Endothelial cell of umbilical vein (primary cell): ENCODE measurements at regions of chr4 and their contacts with region 1.

Region 1: DNA sequence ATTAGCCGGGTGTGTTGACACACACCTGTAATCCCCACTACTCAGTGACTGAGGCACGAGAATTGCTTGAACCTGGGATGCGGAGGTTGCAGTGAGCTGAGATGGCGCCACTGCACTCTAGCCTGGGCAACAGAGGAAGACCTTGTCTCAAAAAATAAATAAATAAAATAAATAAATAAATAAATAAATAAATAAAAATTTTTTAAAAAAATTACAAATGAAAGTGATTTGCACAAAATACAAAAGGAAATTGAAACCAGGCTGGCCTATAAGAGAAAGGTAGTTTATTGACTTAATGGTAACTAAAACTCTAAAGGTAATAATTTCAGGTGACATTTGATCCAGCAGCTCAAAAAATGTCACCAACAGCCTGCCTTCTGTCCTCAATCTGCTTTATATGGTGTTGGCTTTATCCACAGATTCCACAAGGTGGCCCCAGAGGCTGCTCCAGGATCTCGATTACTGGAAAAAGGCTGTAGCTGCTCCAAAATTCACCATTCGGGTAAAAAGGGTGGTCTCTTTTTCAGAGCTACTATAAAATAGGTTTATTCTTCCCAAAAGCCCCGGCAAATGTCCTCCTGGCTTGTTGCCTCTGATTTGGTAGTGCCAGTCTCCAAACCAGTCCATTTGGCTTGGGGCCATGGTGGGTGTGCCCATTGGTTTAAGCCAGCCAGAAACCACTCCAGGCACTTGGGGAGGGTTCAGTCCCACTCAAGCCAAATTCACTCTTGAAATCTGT is 61.4 kb upstream of the TRIM2 start:
- DNase-seq: peak; percentile 79
- H3K4me3 ChIP-seq: no peak overlapping the region
- H3K27ac ChIP-seq: no peak overlapping the region
- H3K4me1 ChIP-seq: peaks cover 14% of the 10 kb centered on the region
- H3K27me3 ChIP-seq: no peaks in the 10 kb centered on the region
- CTCF ChIP-seq: peak; percentile 80
- POLR2A ChIP-seq: no peak

Region 2: DNA sequence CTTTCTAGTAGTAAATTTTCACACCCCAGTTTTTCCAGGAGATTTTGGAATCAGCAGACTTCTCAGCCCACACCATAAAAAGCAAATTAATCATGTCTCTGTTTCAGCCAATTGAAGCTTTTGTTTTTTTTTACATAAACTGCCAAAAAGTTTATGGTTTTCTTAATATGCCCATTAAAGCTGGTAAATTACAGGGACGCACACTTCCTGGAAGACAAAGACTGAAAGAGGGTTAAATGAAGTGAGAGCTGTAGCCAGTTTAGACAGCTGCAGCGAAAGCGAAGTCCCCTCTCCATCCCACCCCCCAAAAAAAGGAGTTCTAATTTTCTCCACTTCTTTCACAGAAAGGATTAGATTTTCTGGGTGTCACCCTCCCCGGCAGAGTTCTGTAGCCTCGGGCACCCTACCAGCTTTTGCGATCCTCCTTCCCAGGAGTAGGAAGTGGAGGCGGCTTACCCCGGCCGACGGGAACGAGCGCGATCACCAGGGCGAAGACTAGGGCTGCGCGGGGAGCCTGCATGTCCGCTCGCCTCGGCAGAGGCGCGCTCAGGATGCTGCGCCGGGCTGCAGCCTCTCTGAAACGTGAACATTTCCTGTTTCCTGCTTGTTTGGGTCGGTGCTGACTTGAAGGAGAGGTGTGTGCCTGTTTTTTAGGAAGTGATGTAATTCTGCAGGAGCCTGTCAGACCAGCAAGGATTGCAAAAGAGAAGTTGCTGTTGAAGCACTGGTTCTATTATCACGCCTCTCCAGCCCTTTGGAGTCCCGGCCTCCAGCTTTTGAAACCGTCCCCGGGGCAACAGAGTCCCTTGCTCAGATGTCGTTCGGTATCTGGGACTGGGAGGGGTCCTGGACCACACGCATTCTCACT is 463.2 kb before region 1 on chr4 and contains the start of gene TMEM154:
- CTCF ChIA-PET with region 1: no interaction called
- POLR2A ChIA-PET with region 1: no interaction called
- dilution Hi-C with region 1: no loop called
- intact Hi-C with region 1: no loop called
- DNase-seq: peak; percentile 75
- H3K4me3 ChIP-seq: peak within 1 kb of the TSS; percentile 49 to 93 (median 83)
- H3K27ac ChIP-seq: peak within 1 kb of the TSS; percentile 85
- H3K4me1 ChIP-seq: peaks cover 44% of the 10 kb centered on the region
- H3K27me3 ChIP-seq: no peaks in the 10 kb centered on the region
- CTCF ChIP-seq: no peak
- POLR2A ChIP-seq: peak; percentile 84
- total RNA-seq, gene TMEM154: 43.6 and 50.0 TPM in 2 replicates

Region 3: DNA sequence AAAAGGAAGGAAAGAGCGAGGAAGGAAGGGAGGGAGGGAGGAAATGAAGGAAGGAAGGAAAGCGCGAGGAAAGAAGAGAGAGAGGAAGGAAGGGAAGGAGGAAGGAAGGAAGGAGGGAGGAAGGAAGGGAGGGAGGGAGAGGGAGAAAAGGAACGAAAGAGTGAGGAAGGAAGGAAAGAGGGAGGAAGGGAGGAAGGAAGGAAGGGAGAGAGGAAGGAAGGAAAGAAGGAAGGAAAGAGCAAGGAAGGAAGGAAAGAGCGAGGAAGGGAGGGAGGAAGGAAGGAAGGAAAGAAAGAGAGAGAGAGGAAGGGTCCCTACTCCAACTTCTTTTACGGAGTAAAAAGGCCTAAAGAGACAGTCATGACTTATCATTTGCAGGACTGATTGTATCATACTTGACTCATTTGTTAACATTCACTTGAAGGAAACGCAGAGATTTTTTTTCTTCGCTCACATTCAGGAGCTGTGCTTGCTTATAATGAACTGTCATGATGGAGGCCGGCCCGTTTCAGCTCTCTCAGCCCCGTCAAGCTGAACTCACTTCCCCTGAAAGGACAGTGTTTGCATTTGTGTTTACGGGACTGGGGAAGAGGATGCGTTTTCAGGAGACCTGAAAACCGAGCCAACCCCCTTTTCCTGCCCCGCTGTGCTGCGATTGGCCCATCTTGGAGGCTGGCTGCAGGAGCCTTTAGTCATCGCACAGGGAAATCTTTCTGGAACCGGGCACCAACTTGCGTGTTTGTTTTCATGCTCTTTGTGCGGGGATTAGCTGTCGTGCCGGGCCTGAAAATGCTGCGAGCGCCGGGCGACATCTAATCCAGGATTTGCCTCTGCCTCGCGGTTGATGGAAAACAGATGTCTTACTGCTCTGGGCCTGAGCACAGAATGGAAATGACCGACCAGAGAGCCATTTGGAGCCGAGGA is 79.2 kb after region 1 on chr4:
- CTCF ChIA-PET with region 1: interaction called, 7 read pairs
- POLR2A ChIA-PET with region 1: no interaction called
- dilution Hi-C with region 1: no loop called
- intact Hi-C with region 1: loop called (anchors 2 kb)
- DNase-seq: peak; percentile 82
- H3K4me3 ChIP-seq: peak overlapping the region; percentile 39 to 73 (median 56)
- H3K27ac ChIP-seq: peak overlapping the region; percentile 57
- H3K4me1 ChIP-seq: peaks cover 14% of the 10 kb centered on the region
- H3K27me3 ChIP-seq: peaks cover 4 to 5% of the 10 kb centered on the region in 2 experiments
- CTCF ChIP-seq: no peak
- POLR2A ChIP-seq: no peak

Region 4: DNA sequence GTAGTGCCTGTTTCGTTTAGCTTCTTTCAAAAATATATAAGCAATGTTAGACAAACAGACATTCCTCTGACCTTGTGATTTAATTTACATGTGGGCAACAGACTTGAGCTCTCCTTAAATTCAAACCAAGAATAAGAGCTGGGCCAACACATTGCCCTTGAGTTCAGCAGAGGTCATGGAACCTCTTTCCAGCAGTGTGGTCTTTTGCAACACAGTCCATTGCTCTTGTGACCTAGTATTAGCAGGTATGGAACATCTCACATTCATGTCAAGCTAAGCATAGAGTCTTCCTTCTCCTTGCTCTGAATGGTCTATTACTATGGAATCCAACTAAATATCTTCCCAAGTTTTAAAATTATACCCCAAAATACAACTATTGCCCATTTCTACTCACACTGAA is 167.9 kb after region 1 on chr4:
- CTCF ChIA-PET with region 1: interaction called, 69 read pairs
- POLR2A ChIA-PET with region 1: no interaction called
- dilution Hi-C with region 1: no loop called
- intact Hi-C with region 1: no loop called
- DNase-seq: no peak
- H3K4me3 ChIP-seq: no peak overlapping the region
- H3K27ac ChIP-seq: no peak overlapping the region
- H3K4me1 ChIP-seq: no peaks in the 10 kb centered on the region
- H3K27me3 ChIP-seq: no peaks in the 10 kb centered on the region
- CTCF ChIP-seq: no peak
- POLR2A ChIP-seq: no peak

Region 5: GRCh38 chr4:153344131-153345010 is 201.5 kb after region 1 on chr4 and contains the start of gene MND1:
- CTCF ChIA-PET with region 1: interaction called, 22 read pairs
- POLR2A ChIA-PET with region 1: no interaction called
- dilution Hi-C with region 1: no loop called
- intact Hi-C with region 1: loop called (anchors 1 kb)
- DNase-seq: peak; percentile 77
- H3K4me3 ChIP-seq: peak within 1 kb of the TSS; percentile 54 to 82 (median 76)
- H3K27ac ChIP-seq: peak within 1 kb of the TSS; percentile 78
- H3K4me1 ChIP-seq: peaks cover 25% of the 10 kb centered on the region
- H3K27me3 ChIP-seq: no peaks in the 10 kb centered on the region
- CTCF ChIP-seq: peak; percentile 77 to 87
- POLR2A ChIP-seq: no peak
- total RNA-seq, gene MND1: 7.7 and 8.2 TPM in 2 replicates

Region 6: DNA sequence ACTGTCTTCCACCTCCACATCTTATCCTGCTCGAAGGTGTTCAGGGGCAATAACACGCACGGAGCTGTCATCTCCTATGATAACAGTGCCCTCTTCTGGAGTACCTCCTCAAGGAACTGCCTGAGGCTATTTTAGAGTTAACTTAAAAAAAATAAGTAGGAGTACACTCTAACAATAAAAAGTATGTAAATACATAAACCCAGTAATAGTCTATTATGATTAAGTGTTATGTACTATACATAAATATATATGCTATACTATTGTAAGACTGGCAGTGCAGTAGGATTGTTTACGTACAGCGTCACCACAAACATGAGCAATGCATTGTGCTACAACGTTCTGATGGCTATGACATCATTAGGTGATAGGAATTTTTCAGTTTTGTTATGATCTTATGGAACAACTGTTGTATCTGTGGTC is 506.7 kb after region 1 on chr4:
- CTCF ChIA-PET with region 1: interaction called, 17 read pairs
- POLR2A ChIA-PET with region 1: no interaction called
- dilution Hi-C with region 1: no loop called
- intact Hi-C with region 1: no loop called
- DNase-seq: peak; percentile 21
- H3K4me3 ChIP-seq: no peak overlapping the region
- H3K27ac ChIP-seq: no peak overlapping the region
- H3K4me1 ChIP-seq: peaks cover 5% of the 10 kb centered on the region
- H3K27me3 ChIP-seq: peaks cover 0 to 2% of the 10 kb centered on the region in 2 experiments
- CTCF ChIP-seq: peak in 1 of 2 donors; percentile 10
- POLR2A ChIP-seq: no peak